Right ventricle myocardium inferior (tissue), 1 donor: ENCODE measurements at regions of chr14 and their contacts with region 1.

Region 1: GRCh38 chr14:101876555-101876938 is 87.8 kb upstream of the DYNC1H1 start:
- DNase-seq: peak; percentile 88
- ATAC-seq: peak; percentile 85

Region 2: GRCh38 chr14:101781240-101782061 is 95.1 kb before region 1 on chr14:
- intact Hi-C with region 1: loop called (anchors 5 kb)
- DNase-seq: peak; percentile 70
- ATAC-seq: peak; percentile 61

Region 3: DNA sequence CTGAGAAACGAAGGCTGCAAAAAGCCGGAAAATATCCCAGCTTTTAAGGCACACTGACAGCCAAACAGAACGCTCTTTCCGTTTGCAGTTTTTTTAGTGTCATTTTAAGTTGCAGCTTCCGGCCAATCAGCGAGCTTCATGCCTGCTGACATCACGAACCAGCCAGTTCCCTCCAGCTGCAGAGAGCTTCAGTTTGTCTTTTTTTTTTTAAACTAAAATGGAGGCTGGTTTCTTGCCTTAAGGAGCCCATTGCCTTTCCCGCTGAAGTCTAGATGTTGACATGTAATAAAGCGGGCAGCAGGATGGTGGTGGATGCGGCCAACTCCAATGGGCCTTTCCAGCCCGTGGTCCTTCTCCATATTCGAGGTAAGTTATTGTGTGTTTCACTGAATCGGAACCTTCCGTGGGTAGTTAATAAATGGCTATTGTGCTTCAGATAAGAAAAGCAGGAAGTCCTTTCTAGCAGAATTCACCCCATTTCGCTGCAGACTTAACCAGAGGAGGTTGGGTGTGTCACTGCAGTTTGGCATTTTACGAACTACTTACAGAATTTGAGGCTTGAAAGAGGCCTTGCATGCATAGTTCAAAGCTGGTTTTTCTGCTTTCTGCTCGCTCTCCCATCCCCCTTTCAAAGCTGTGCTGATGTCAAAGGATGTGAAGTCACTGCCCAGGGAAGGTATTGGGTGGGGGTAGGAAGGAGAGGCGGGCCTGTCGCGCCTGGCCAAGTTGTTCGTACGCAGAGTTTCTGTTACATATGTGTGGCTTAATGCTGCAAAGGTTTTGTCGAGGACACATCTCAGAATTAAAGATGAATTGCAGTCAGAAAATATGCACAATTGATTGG is 66.7 kb before region 1 on chr14:
- intact Hi-C with region 1: loop called (anchors 5 kb)
- DNase-seq: peak; percentile 91
- ATAC-seq: peak; percentile 94